ENCODE measurements at regions of chr2 and their contacts with region 1.

Region 1: GRCh38 chr2:110812726-110813645 is 80.6 kb downstream of the ACOXL start:
- DNase-seq: no peak
- H3K4me3 ChIP-seq: no peak overlapping the region
- H3K27ac ChIP-seq: no peak overlapping the region
- H3K4me1 ChIP-seq: no peaks in the 10 kb centered on the region
- H3K27me3 ChIP-seq: peaks cover 3 to 13% of the 10 kb centered on the region in 2 experiments
- CTCF ChIP-seq: no peak
- POLR2A ChIP-seq: no peak

Region 2: DNA sequence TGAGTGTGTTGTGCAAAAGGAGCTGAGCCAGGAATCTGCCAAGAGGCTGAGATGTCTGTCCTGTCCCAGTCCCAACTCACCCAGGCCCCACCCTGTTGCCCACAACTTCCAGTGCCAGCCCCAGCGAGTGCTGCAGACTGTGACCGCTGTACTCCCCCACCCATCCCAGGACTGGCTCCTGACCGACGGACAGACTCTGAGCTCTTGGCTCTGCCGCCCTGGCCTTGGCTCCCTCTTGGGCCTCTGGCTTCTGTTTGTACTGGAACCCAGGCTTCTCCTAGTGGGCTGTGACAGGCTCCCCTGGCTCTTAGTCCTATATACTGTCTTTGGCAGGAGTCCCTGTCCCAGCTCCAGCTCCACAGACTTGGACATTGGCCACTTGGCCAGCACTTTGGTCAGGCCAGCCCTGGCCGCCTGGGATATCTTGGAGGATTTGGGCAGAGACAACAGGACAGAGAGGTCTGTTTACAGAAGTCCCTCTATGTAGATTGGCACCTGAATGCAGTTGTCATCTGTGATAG is 39.5 kb before region 1 on chr2:
- CTCF ChIA-PET with region 1: no interaction called
- POLR2A ChIA-PET with region 1: no interaction called
- dilution Hi-C with region 1: no loop called
- intact Hi-C with region 1: no loop called
- DNase-seq: no peak
- H3K4me3 ChIP-seq: no peak overlapping the region
- H3K27ac ChIP-seq: no peak overlapping the region
- H3K4me1 ChIP-seq: no peaks in the 10 kb centered on the region
- H3K27me3 ChIP-seq: peaks cover 15 to 18% of the 10 kb centered on the region in 2 experiments
- CTCF ChIP-seq: no peak
- POLR2A ChIP-seq: no peak

Region 3: DNA sequence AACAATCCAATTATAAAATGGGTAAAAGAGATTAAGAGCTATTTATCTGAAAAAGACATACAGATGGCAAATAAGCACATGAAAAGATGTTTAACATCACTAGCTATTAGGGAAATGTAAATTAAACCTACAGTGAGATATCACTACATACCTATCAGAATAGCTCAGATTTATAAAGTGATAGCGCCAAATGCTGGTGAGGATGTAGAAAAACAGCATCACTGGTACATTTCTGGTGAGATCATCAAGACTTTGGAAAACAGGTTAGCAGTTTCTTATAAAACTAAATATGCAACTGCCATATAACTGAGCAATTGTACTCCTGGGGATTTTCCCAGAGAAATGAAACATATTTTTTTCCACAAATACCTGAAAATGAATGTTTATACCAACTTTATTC is 19.8 kb after region 1 on chr2:
- CTCF ChIA-PET with region 1: interaction called, 10 read pairs
- POLR2A ChIA-PET with region 1: no interaction called
- dilution Hi-C with region 1: no loop called
- intact Hi-C with region 1: no loop called
- DNase-seq: no peak
- H3K4me3 ChIP-seq: no peak overlapping the region
- H3K27ac ChIP-seq: no peak overlapping the region
- H3K4me1 ChIP-seq: no peaks in the 10 kb centered on the region
- H3K27me3 ChIP-seq: peaks cover 20 to 27% of the 10 kb centered on the region in 2 experiments
- CTCF ChIP-seq: no peak
- POLR2A ChIP-seq: no peak